Activated CD4-positive, alpha-beta T cell treated with anti-CD3 and anti-CD28 coated beads for 36 hours (primary cell): ENCODE measurements at regions of chr16 and their contacts with region 1.

Region 1: DNA sequence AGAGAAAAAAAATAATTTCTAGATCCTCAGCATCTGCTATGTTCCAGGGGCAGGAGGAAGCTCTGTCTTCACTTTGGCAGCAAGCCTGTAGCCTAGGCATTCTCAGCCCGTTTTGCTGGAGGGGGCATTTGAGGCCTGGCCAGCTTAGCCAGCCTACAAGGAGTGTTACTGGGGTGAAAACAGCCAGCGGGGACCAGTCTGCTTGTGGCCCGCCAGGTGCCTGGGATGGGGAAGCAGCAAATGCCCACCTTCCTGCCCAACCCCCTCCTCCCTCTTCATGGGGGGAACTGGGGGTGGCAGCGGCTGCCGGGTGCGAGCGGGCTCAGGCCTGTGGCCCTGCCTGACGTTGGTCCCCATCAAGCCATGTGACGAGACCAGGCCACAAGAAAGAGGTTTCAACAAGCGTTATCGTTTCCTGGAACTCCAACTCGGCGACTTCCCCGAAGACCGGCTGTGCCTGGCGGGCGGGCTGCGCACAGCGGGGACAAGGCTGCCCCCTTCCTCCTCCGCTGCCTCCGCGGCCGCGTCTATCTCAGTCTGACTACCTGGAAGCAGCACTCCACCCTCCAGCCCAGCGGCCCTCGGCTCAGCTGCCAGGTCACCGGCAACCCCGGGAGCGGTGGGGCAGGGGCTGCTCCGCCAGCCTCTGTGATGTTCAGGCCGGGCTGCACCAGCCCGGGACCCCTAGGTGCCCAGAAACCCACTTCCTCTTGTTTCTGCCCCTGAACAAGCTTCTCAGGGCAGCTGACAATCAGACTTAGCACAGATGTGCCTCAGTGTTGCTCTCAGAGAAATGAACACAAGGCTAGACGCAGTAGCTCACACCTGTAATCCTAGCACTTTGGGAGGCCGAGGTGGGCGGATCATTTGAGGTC is 22.9 kb downstream of the SOCS1 start:
- DNase-seq: peak; percentile 96
- ATAC-seq: peak; percentile 82
- H3K4me3 Mint-ChIP-seq: peak overlapping the region; percentile 60
- H3K27ac Mint-ChIP-seq: peak overlapping the region; percentile 97
- H3K4me1 Mint-ChIP-seq: peaks cover 80% of the 10 kb centered on the region
- H3K27me3 Mint-ChIP-seq: no peaks in the 10 kb centered on the region

Region 2: GRCh38 chr16:11245988-11246387 is 12.9 kb after region 1 on chr16:
- CTCF ChIA-PET with region 1: interaction called, 6 read pairs
- POLR2A ChIA-PET with region 1: no interaction called
- intact Hi-C with region 1: loop called in 1 of 2 experiments (anchors 1 kb)
- DNase-seq: peak; percentile 61
- ATAC-seq: peak; percentile 24
- H3K4me3 Mint-ChIP-seq: no peak overlapping the region
- H3K27ac Mint-ChIP-seq: no peak overlapping the region
- H3K4me1 Mint-ChIP-seq: peaks cover 43% of the 10 kb centered on the region
- H3K27me3 Mint-ChIP-seq: no peaks in the 10 kb centered on the region